ENCODE measurements at regions of chr1 and their contacts with region 1.

Region 1: GRCh38 chr1:7948960-7949359 is 8.3 kb upstream of the TNFRSF9 start:
- DNase-seq: peak; percentile 47
- H3K4me3 Mint-ChIP-seq: peak overlapping the region; percentile 26
- H3K27ac Mint-ChIP-seq: peak overlapping the region; percentile 82
- H3K4me1 Mint-ChIP-seq: peaks cover 34% of the 10 kb centered on the region
- H3K27me3 Mint-ChIP-seq: no peaks in the 10 kb centered on the region

Region 2: DNA sequence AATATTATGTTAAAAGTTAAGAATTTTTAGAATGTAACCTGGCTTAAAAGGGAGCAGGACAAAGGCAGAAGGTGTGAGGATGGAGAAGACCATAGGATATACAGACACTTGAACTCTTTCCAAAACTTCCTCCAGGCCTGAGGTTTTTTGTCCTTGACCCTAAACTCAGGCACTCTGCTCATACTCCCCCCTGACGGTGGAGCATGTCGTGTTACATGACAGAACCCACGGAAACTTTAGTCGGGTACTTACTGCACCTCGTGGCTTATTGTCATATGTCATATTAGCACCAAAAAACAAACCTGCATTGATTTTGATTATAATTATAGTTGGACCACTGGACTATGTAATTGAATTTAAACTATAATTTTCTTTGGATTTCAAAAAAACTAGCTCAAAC is 29.1 kb before region 1 on chr1:
- CTCF ChIA-PET with region 1: interaction called, 6 read pairs
- POLR2A ChIA-PET with region 1: interaction called, 11 read pairs
- DNase-seq: no peak
- H3K4me3 Mint-ChIP-seq: no peak overlapping the region
- H3K27ac Mint-ChIP-seq: no peak overlapping the region
- H3K4me1 Mint-ChIP-seq: peaks cover 22% of the 10 kb centered on the region
- H3K27me3 Mint-ChIP-seq: no peaks in the 10 kb centered on the region

Region 3: GRCh38 chr1:7930645-7931445 is 18.1 kb before region 1 on chr1:
- CTCF ChIA-PET with region 1: interaction called, 13 read pairs
- POLR2A ChIA-PET with region 1: interaction called, 28 read pairs
- DNase-seq: no peak
- H3K4me3 Mint-ChIP-seq: peak overlapping the region; percentile 48
- H3K27ac Mint-ChIP-seq: peak overlapping the region; percentile 88
- H3K4me1 Mint-ChIP-seq: peaks cover 32% of the 10 kb centered on the region
- H3K27me3 Mint-ChIP-seq: peaks cover 1% of the 10 kb centered on the region